PC-9 (cell line): ENCODE measurements at regions of chr17 and their contacts with region 1.

Region 1: GRCh38 chr17:20063665-20064648 is 54.8 kb downstream of the SPECC1 start:
- DNase-seq: peak; percentile 81 to 83
- H3K4me3 ChIP-seq: peak overlapping the region; percentile 19; the same call in 1 of the 2 replicates
- H3K27ac ChIP-seq: peak overlapping the region; percentile 87
- H3K4me1 ChIP-seq: peaks cover 85% of the 10 kb centered on the region
- H3K27me3 ChIP-seq: no peaks in the 10 kb centered on the region
- CTCF ChIP-seq: no peak

Region 2: GRCh38 chr17:19678581-19679453 is 385.1 kb before region 1 on chr17:
- CTCF ChIA-PET with region 1: no interaction called
- POLR2A ChIA-PET with region 1: interaction called, 11 read pairs
- intact Hi-C with region 1: no loop called
- DNase-seq: no peak
- H3K4me3 ChIP-seq: no peak overlapping the region
- H3K27ac ChIP-seq: no peak overlapping the region
- H3K4me1 ChIP-seq: peaks cover 27% of the 10 kb centered on the region
- H3K27me3 ChIP-seq: no peaks in the 10 kb centered on the region
- CTCF ChIP-seq: no peak